Endothelial cell of umbilical vein (primary cell): ENCODE measurements at regions of chr6 and their contacts with region 1.

Region 1: GRCh38 chr6:166683477-166683876 is 56.4 kb upstream of the RPS6KA2 start:
- DNase-seq: peak; percentile 75
- H3K4me3 ChIP-seq: no peak overlapping the region
- H3K27ac ChIP-seq: peak overlapping the region; percentile 66
- H3K4me1 ChIP-seq: peaks cover 14% of the 10 kb centered on the region
- H3K27me3 ChIP-seq: no peaks in the 10 kb centered on the region
- CTCF ChIP-seq: no peak
- POLR2A ChIP-seq: no peak

Region 2: DNA sequence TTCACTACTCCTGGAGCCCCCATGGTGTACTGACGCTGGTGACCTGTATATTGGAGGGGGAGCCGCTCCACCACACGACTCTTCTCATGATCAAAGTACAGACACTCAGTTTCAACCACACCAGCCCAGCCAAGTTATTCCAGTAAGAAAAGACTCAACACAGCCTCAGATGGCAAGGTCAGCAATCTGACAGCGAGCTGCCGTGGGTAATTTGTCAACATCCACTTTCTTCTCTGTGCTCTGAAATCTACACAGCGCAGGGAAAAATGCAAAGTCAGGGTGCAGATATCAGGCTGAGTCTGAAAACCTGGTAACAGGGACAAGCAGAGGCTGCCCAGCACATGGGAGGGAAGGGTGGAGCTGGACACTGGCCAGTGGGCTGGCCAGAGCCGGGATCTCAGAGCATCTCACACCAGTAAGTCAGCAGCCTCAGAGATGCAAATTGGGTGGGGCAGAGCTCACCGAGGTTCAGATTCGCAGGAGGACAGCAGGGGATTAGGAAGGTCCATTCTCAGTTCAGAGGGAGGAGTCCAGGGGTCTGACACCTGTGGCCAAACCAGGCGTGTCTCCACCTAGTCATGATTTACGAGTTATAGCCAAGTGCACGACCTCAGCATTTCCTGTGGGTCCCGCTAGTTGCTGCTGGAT is 11.9 kb before region 1 on chr6:
- CTCF ChIA-PET with region 1: interaction called, 3 read pairs
- POLR2A ChIA-PET with region 1: no interaction called
- dilution Hi-C with region 1: no loop called
- intact Hi-C with region 1: loop called (anchors 1 kb)
- DNase-seq: no peak
- H3K4me3 ChIP-seq: no peak overlapping the region
- H3K27ac ChIP-seq: no peak overlapping the region
- H3K4me1 ChIP-seq: no peaks in the 10 kb centered on the region
- H3K27me3 ChIP-seq: peaks cover 1 to 7% of the 10 kb centered on the region in 2 experiments
- CTCF ChIP-seq: no peak
- POLR2A ChIP-seq: no peak